Pancreas (tissue), 10 donors: ENCODE measurements at regions of chr3 and their contacts with region 1.

Region 1: GRCh38 chr3:124905849-124906248 is 18.7 kb upstream of the ITGB5 start:
- DNase-seq: no peak
- ATAC-seq: no peak
- H3K4me3 ChIP-seq: no peak overlapping the region
- H3K27ac ChIP-seq: no peak overlapping the region
- H3K4me1 ChIP-seq: no peaks in the 10 kb centered on the region
- H3K27me3 ChIP-seq: peaks cover 0 to 7% (median 0%) of the 10 kb centered on the region in 4 donors
- CTCF ChIP-seq: no peak

Region 2: DNA sequence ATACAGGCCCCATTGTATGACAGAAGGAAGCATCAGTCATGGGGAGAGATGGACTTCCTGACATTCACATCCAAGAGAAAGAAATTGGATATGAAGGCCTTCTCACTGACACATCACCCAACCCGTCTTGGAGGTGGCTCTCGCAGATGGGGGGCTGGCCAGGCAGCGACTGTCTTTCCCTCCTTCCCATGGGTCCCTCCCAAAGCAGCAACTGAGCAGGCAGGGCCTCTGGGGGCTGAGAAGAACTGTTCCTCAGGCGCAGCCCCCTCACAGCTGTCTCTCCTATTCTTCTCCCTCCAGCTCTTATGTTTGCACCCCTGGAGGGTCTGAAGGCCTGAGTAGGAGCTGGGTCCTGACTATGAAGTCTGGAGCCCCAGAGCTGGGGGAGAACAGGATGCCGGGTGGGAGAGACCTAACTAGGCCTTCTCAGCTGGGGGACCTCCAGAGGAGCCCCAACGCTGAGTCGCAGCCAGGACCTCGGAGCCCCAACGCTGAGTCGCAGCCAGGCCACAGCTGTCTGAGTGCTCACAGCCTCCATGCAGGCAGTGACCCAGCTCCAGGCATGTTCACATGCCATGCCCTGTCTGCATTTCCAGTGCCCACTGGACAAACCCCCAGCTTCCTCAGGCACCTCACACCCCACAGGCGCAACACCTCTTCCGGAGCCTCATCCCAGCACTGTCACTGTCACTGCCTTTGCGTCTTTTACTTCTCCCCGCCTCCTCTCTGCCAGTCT is 146.0 kb before region 1 on chr3:
- intact Hi-C with region 1: loop called (anchors 2 to 10 kb)
- DNase-seq: no peak
- ATAC-seq: no peak
- H3K4me3 ChIP-seq: no peak overlapping the region
- H3K27ac ChIP-seq: no peak overlapping the region
- H3K4me1 ChIP-seq: peaks cover 0 to 9% (median 0%) of the 10 kb centered on the region in 3 donors
- H3K27me3 ChIP-seq: no peaks in the 10 kb centered on the region
- CTCF ChIP-seq: no peak

Region 3: GRCh38 chr3:124768812-124769211 is 137.0 kb before region 1 on chr3:
- intact Hi-C with region 1: loop called in 1 of 3 experiments (anchors 5 kb)
- DNase-seq: peak in 1 of 6 donors; percentile 67
- ATAC-seq: peak; percentile 63 to 91 (median 76)
- H3K4me3 ChIP-seq: no peak overlapping the region
- H3K27ac ChIP-seq: no peak overlapping the region
- H3K4me1 ChIP-seq: no peaks in the 10 kb centered on the region
- H3K27me3 ChIP-seq: no peaks in the 10 kb centered on the region
- CTCF ChIP-seq: peak in 1 of 4 donors; percentile 8

Region 4: DNA sequence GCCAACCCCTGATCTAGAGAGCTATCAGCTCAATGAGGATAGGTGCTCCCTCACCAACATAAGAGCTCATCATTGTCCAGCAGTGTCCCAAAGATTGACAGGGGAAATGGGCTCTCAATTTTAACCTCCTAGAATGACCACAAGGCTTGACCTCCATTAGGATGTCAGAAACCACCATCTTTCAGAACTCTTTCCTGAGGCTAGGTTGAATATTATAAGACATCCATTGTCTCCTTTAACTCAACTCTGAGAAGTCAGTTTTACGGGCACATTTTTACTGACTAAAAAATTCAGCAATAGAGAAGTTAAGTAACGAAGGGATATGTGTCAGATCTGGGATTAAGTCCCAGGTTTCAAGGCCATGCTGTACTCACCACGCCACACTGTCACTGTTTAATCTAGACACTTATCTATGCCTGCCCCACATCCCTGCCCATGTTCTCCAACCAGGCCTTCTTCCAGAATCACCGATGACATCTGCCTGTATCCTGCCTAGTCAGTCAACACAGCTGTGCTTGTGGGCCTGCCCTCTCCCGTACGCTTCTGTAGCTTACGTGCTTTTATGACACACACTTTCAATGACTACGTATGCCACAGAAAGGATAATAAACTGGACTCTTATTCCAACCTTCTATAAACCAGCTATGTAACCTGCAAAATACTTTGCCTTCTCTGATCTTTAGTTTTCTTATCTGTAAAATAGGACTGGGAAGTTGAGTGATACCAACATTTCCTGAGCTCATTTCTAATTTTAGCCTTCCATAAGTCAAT is 45.8 kb after region 1 on chr3:
- intact Hi-C with region 1: no loop called
- DNase-seq: no peak
- ATAC-seq: peak in 2 of 4 donors; percentile 35 to 40
- H3K4me3 ChIP-seq: no peak overlapping the region
- H3K27ac ChIP-seq: no peak overlapping the region
- H3K4me1 ChIP-seq: peaks cover 0 to 5% (median 0%) of the 10 kb centered on the region in 3 donors
- H3K27me3 ChIP-seq: no peaks in the 10 kb centered on the region
- CTCF ChIP-seq: no peak

Region 5: GRCh38 chr3:125062888-125063618 is 157.2 kb after region 1 on chr3:
- intact Hi-C with region 1: no loop called
- DNase-seq: peak in 3 of 6 donors; percentile 45 to 61 (median 48)
- ATAC-seq: peak; percentile 43 to 76 (median 70)
- H3K4me3 ChIP-seq: no peak overlapping the region
- H3K27ac ChIP-seq: peak overlapping the region in 2 of 4 donors; percentile 15 to 19
- H3K4me1 ChIP-seq: peaks cover 3 to 12% (median 11%) of the 10 kb centered on the region in 3 donors
- H3K27me3 ChIP-seq: no peaks in the 10 kb centered on the region
- CTCF ChIP-seq: no peak